ENCODE measurements at regions of chr1 and their contacts with region 1.

Region 1: GRCh38 chr1:156444407-156445001 is 56.1 kb downstream of the MEF2D start:
- DNase-seq: no peak
- H3K4me3 ChIP-seq: no peak overlapping the region
- H3K27ac ChIP-seq: no peak overlapping the region
- H3K4me1 ChIP-seq: no peaks in the 10 kb centered on the region
- H3K27me3 ChIP-seq: peaks cover 6% of the 10 kb centered on the region
- CTCF ChIP-seq: peak in 1 of 3 experiments; percentile 4
- POLR2A ChIP-seq: no peak

Region 2: DNA sequence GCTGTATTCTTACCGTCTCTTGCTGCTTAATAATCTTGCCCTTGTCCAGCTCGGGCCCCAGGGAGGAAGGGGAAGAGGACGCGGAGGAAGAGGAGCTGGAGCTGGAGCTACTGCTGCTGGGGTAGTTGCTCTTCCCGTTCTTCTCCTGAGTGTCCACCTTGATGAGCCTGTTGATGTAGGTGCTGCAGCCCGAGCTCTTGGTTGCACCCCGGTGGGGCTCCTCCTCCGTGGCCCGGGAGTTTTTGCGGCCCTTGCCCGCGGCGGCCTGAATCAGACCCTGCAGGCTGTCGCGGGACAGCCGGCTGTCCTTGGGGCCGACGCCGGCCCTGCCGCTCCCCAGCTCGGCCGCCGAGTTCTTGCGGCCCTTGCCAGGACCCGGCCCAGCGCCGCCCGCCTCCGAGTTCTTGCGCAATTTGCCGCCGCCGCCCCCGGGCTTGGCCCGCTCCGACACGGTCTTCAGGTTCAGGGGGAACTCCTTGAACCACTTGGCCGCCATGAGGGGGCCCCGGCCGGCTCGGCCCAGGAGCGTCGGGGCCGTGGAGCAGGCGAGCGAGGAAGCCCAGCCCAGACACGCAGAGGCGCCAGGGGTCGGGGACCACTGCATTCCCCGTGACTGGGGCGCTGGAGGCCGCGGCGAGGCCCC is 1943.0 kb before region 1 on chr1:
- intact Hi-C with region 1: loop called (anchors 5 kb)
- DNase-seq: no peak
- H3K4me3 ChIP-seq: peak overlapping the region; percentile 40 to 59
- H3K27ac ChIP-seq: no peak overlapping the region
- H3K4me1 ChIP-seq: peaks cover 16% of the 10 kb centered on the region
- H3K27me3 ChIP-seq: peaks cover 15% of the 10 kb centered on the region
- CTCF ChIP-seq: no peak
- POLR2A ChIP-seq: no peak

Measured in vagina (tissue), 2 donors.